ENCODE measurements at regions of chr6 and their contacts with region 1.

Region 1: DNA sequence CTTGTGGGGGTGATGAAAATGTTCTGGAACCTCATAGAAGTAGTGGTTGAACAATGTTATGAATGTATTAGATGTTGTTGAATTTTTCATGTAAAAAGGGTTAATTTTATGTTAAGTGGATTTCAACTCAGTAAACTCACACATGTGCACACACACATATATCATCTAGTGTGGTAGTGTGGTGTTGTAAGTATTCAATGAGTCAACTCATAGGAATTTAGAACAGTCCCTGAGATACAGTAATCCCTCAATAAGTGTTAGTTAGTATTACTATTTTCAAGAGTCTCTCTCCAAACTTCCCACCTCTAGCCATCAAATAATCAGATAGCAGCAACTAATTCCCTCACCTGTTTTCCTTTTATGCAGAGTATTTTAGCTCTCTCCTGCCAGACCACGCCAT is 563.1 kb upstream of the JARID2 start:
- DNase-seq: no peak
- H3K4me3 ChIP-seq: no peak overlapping the region
- H3K4me3 Mint-ChIP-seq: peak overlapping the region in 1 of 2 donors; percentile 18
- H3K27ac ChIP-seq: no peak overlapping the region
- H3K27ac Mint-ChIP-seq: peak overlapping the region in 2 of 7 donors; percentile 73 to 81
- H3K4me1 ChIP-seq: peaks cover 12 to 15% of the 10 kb centered on the region in 2 donors
- H3K4me1 Mint-ChIP-seq: peaks cover 12% of the 10 kb centered on the region
- H3K27me3 ChIP-seq: no peaks in the 10 kb centered on the region
- H3K27me3 Mint-ChIP-seq: peaks cover 0 to 2% (median 2%) of the 10 kb centered on the region in 3 donors
- CTCF ChIP-seq: no peak

Region 2: GRCh38 chr6:14621518-14621917 is 61.3 kb before region 1 on chr6:
- intact Hi-C with region 1: loop called in 1 of 2 experiments (anchors 10 kb)
- DNase-seq: peak; percentile 12 to 37 (median 27)
- H3K4me3 ChIP-seq: peak overlapping the region in 1 of 3 experiments; percentile 43
- H3K4me3 Mint-ChIP-seq: peak overlapping the region in 1 of 2 donors; percentile 81
- H3K27ac ChIP-seq: no peak overlapping the region
- H3K27ac Mint-ChIP-seq: peak overlapping the region in 3 of 7 donors; percentile 2 to 53 (median 47)
- H3K4me1 ChIP-seq: peaks cover 16 to 19% of the 10 kb centered on the region in 2 donors
- H3K4me1 Mint-ChIP-seq: peaks cover 21% of the 10 kb centered on the region
- H3K27me3 ChIP-seq: no peaks in the 10 kb centered on the region
- H3K27me3 Mint-ChIP-seq: peaks cover 2 to 3% (median 3%) of the 10 kb centered on the region in 3 donors
- CTCF ChIP-seq: no peak

Region 3: DNA sequence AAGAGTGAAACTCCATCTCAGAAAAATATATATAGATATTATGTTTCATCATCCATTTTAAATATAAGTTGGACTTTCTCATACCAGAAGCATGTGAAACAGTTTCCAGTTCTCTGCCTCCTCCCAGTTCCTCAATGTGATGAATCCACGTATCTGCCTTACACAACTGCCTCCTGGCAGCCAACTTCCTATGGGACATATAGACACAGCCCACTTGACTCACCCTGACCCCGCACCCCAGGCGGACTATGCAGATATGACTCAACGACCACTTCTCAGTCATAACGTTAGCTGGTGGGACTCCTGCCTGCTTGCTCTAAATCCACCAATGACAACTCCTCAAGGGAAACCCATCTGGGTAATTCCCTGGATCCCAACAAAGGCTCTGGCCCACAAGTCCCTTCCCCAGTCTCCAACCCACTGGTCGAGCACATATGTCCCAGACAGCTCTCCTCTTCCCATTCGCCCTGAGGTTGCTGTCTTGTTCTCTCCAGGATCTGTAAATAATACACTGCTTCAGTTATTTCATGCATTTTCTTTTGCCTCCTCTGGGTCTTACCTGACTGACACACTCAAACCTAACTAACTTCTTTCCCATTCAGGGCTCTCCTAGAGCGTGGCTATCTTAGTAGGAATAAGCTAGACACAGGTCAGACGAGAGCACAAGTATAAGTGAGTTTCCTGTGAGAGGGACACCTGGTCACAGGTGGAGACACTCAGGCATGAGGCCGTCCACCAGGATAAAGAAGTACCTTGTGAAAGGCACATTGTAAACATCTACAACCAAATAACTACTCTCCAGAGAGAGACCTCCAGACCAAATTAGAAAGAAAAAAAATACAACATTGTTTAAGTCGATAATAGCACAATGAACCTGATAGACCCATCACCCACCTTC is 16.7 kb before region 1 on chr6:
- intact Hi-C with region 1: no loop called
- DNase-seq: peak; percentile 99 to 100 (median 100)
- H3K4me3 ChIP-seq: no peak overlapping the region
- H3K4me3 Mint-ChIP-seq: peak overlapping the region in 1 of 2 donors; percentile 69
- H3K27ac ChIP-seq: peak overlapping the region; percentile 75 to 89
- H3K27ac Mint-ChIP-seq: peak overlapping the region; percentile 94 to 99 (median 99)
- H3K4me1 ChIP-seq: peaks cover 31 to 33% of the 10 kb centered on the region in 2 donors
- H3K4me1 Mint-ChIP-seq: peaks cover 32% of the 10 kb centered on the region
- H3K27me3 ChIP-seq: no peaks in the 10 kb centered on the region
- H3K27me3 Mint-ChIP-seq: peaks cover 0 to 2% (median 0%) of the 10 kb centered on the region in 3 donors
- CTCF ChIP-seq: no peak